A673 (cell line): ENCODE measurements at regions of chr21 and their contacts with region 1.

Region 1: DNA sequence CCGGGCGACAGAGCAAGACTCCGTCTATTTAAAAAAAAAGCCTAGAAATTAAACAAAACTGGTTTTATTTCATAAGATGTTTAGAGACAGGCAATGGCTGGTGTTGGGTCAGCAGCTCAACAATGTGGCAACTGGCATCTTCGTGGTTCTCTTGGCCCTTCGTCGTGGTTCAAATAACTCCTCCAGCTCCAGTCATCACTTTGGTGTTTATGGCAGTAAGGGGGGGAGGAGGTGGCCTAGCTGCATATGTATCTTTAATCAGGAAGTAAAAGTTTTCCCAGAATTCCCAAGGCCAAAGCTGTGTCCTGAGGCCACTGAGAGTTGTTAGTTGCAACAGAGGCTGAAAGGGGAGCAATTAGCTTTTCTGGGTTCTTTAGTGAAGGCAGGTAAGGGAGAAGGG is 13.0 kb upstream of the LTN1 start:
- DNase-seq: no peak
- H3K4me3 ChIP-seq: no peak overlapping the region
- H3K27ac ChIP-seq: no peak overlapping the region
- H3K4me1 ChIP-seq: peaks cover 6% of the 10 kb centered on the region
- H3K27me3 ChIP-seq: no peaks in the 10 kb centered on the region
- CTCF ChIP-seq: no peak

Region 2: GRCh38 chr21:28938726-28939125 is 67.0 kb before region 1 on chr21:
- CTCF ChIA-PET with region 1: no interaction called
- POLR2A ChIA-PET with region 1: no interaction called
- intact Hi-C with region 1: no loop called
- DNase-seq: no peak
- H3K4me3 ChIP-seq: no peak overlapping the region
- H3K27ac ChIP-seq: no peak overlapping the region
- H3K4me1 ChIP-seq: no peaks in the 10 kb centered on the region
- H3K27me3 ChIP-seq: no peaks in the 10 kb centered on the region
- CTCF ChIP-seq: no peak

Region 3: DNA sequence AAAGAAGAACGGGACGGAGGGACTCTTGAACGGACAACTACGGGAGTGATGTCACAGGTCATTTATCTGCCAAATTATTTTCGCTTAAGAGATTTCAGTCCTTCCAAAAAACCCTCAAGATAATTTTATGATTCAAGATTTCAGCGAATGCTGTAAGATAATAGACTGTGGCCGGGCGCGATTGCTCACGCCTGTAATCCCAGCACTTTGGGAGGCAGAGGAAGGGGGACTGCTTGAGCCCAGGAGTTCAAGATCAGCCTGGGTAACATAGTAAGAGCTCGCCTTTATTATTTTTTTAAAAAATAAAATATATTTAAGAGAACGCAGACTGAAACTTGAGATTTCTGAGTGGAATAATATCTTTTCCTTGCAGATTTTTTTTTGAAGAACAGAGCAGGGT is 12.8 kb after region 1 on chr21:
- CTCF ChIA-PET with region 1: no interaction called
- POLR2A ChIA-PET with region 1: interaction called, 10 read pairs
- intact Hi-C with region 1: no loop called
- DNase-seq: peak; percentile 9
- H3K4me3 ChIP-seq: peak overlapping the region; percentile 87
- H3K27ac ChIP-seq: peak overlapping the region; percentile 86
- H3K4me1 ChIP-seq: peaks cover 4% of the 10 kb centered on the region
- H3K27me3 ChIP-seq: no peaks in the 10 kb centered on the region
- CTCF ChIP-seq: no peak

Region 4: DNA sequence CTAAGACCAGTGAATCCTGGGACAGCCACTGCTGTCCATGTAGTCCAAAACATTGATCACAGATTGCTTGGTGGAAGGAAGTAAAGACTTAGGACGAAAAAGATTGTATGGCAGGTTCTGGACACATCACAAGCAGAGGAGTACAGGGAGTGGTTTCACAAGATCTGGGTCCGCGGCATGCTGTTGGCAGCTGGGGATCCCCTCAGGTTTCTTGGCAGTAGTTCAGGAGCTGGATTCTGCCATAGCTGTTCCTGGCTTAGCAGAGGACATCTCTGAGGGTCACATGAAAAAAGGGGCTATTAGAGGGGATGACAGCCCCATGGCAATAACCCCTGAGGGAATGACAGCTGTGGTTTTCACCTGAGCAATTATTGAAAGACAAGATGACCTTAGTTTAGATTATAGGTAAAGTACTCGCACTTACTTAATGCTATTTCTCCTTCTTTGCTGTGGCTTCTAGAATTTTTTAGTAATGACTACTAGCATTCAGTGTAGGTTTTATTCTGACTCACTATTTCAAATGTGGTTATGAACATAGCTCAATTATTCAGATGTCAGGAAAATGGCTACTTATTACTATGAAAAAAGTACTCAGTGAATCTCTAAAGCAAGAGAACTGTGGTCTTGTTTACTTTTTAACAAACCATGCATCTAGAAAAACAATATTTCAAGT is 1323.6 kb after region 1 on chr21:
- CTCF ChIA-PET with region 1: no interaction called
- POLR2A ChIA-PET with region 1: no interaction called
- intact Hi-C with region 1: no loop called
- DNase-seq: no peak
- H3K4me3 ChIP-seq: no peak overlapping the region
- H3K27ac ChIP-seq: no peak overlapping the region
- H3K4me1 ChIP-seq: no peaks in the 10 kb centered on the region
- H3K27me3 ChIP-seq: peaks cover 3% of the 10 kb centered on the region
- CTCF ChIP-seq: no peak